Lower leg skin (tissue), 4 donors: ENCODE measurements at regions of chr1 and their contacts with region 1.

Region 1: GRCh38 chr1:202976633-202977032 is 9.6 kb upstream of the CYB5R1 start:
- DNase-seq: no peak
- H3K4me3 ChIP-seq: no peak overlapping the region
- CTCF ChIP-seq: no peak
- POLR2A ChIP-seq: no peak

Region 2: DNA sequence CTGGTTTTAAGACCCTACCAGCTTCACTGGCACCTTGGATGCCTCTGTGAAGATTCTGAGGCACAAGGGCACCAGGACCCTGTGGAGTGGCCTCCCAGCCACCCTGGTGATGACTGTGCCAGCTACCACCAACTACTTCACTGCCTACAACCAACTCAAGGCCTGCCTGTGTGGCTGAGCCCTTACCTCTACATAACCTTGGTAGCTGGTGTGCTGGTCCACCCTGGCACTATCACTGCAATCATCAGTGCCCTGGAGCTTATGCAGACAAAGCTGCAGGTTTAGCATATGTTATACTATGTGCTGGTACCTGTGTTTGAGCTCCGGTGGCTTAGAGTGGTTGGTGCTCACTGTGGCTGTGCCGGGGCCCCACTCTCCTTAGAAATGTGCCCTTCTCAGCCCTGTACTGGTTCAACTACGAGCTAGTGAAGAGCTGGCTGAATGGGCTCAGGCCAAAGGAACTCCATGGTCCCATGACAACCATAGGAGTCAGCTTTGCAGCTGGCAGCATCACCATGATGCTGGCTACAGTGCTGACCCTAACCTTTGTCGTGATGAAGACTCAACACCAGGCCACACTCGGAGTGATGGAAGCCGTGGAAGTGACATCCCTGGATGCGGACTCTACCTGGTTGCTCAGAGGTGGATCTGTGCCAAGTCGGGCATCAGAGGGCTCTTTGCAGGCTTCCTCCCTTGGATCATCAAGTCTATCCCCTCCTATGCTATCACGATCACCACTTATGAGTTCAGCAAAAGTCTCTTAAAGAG is 180.1 kb before region 1 on chr1:
- intact Hi-C with region 1: loop called (anchors 10 kb)
- DNase-seq: no peak
- H3K4me3 ChIP-seq: no peak overlapping the region
- CTCF ChIP-seq: no peak
- POLR2A ChIP-seq: no peak

Region 3: DNA sequence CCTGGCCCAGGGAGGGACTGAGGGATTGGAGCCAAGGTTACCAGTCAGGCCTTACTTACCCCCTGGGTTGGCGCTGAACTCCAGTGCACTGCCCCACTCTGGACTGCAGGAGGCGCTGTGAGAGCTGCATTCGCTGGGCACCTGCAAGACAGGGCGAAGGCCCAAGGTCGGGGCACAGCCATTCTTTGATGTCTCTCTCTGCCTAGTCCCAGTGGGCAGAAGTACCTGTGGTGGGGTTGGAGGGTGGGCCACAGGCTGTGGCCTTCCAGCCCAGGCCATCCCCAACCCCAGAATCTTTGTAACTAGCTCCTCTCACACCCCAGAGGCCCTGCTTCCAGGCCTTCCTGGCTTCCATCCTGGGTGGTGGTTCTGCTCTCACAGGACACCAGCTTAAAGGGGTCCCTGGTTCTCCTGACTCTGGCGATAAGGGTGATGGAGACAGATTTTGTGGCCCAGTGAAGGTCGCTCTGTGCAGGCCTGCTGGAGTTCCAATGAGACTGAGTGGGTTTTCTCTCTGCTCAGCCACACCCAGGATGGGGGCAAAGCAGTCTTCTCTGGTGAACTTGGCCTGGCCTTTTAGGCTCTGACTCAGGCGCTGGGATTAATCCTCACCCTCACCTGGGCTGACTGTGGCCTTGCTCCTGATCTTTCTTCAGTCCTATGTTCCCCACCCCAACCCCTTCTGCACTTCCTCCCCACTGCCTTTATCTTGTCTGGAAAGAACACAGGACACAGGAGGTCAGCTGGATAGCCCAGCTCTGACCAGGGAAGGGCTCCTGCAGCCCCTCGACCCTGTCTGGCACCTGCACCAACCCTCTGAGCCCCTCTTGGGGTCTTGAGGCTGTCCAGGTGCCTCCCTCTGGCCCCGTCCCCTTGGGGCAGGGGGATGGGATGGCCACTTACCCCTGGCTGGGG is 108.2 kb after region 1 on chr1:
- intact Hi-C with region 1: no loop called
- DNase-seq: peak in 1 of 2 donors; percentile 45
- H3K4me3 ChIP-seq: no peak overlapping the region
- CTCF ChIP-seq: no peak
- POLR2A ChIP-seq: no peak

Region 4: DNA sequence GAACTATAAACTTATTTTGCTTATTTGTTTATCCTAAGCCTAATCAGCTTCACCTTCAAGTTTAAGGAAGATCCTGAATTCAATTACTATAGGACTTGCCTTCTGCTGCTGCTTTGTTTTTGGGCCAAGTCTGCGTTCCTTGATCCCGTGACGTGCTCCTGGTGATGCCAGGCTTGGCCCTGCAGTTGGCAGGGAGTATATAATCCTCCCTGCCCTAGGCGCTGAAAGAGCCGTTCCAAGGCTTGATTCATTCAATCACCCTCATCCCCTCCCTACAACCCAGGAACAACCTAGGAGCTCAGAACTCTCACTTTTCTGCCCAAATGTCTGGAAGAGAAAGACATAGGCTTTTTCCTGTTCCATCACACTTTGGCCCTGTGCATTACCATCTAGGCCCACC is 1721.3 kb after region 1 on chr1:
- intact Hi-C with region 1: no loop called
- DNase-seq: peak in 1 of 2 donors; percentile 54
- H3K4me3 ChIP-seq: no peak overlapping the region
- CTCF ChIP-seq: no peak
- POLR2A ChIP-seq: no peak